AG04450 (cell line): ENCODE measurements at regions of chr12 and their contacts with region 1.

Region 1: GRCh38 chr12:12428047-12428446 is 71.2 kb downstream of the BORCS5 start:
- DNase-seq: no peak
- H3K4me3 ChIP-seq: no peak overlapping the region
- H3K27ac ChIP-seq: no peak overlapping the region
- H3K27me3 ChIP-seq: no peaks in the 10 kb centered on the region
- CTCF ChIP-seq: no peak

Region 2: DNA sequence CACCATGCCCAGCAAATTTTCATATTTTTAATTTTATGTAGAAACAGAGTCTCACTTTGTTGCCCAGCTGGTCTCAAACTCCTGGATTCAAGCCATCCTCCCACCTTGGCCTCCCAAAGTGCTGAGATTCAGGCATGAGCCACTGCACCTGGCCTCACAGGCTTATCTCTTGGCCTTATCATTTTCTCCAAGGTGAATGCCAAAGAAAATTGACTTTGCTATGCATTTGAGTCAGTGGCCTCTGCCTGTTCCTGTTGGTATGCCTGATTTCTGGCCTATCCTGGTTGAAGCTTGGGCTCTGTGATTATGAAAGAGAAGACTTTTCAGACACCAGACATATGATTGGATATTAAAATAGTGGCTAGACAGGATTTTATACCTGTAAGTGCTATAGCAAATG is 112.2 kb before region 1 on chr12:
- CTCF ChIA-PET with region 1: no interaction called
- POLR2A ChIA-PET with region 1: no interaction called
- DNase-seq: no peak
- H3K4me3 ChIP-seq: no peak overlapping the region
- H3K27ac ChIP-seq: no peak overlapping the region
- H3K27me3 ChIP-seq: no peaks in the 10 kb centered on the region
- CTCF ChIP-seq: no peak

Region 3: GRCh38 chr12:12384571-12385340 is 43.3 kb before region 1 on chr12:
- CTCF ChIA-PET with region 1: no interaction called
- POLR2A ChIA-PET with region 1: no interaction called
- DNase-seq: no peak
- H3K4me3 ChIP-seq: no peak overlapping the region
- H3K27ac ChIP-seq: no peak overlapping the region
- H3K27me3 ChIP-seq: no peaks in the 10 kb centered on the region
- CTCF ChIP-seq: no peak

Region 4: DNA sequence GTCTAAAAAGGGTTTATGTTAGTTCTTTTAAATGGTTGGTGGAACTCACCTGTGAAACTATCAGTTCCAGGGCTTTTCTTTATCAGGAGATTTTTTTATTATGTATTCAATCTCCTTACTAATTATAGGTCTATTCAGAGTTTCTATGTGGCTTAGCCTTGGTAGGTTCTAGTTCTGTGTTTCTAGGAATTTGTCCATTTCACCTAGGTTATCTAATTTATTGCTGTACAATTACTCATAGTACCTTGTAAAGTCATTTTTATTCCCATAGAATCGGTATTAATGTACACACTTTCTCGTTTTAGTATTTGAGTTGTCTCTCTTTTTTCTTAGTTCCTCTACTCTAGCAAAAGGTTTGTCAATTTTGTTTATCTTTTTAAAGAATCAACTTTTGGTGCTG is 12.2 kb before region 1 on chr12:
- CTCF ChIA-PET with region 1: interaction called, 10 read pairs
- POLR2A ChIA-PET with region 1: no interaction called
- DNase-seq: no peak
- H3K4me3 ChIP-seq: no peak overlapping the region
- H3K27ac ChIP-seq: no peak overlapping the region
- H3K27me3 ChIP-seq: no peaks in the 10 kb centered on the region
- CTCF ChIP-seq: no peak